ENCODE measurements at regions of chr16 and their contacts with region 1.

Region 1: GRCh38 chr16:22346483-22346882 is 27.9 kb downstream of the CDR2 start:
- DNase-seq: no peak
- ATAC-seq: no peak
- H3K4me3 ChIP-seq: no peak overlapping the region
- H3K4me3 Mint-ChIP-seq: no peak overlapping the region
- H3K27ac ChIP-seq: no peak overlapping the region
- H3K27ac Mint-ChIP-seq: peak overlapping the region; percentile 74 to 78
- H3K4me1 ChIP-seq: no peaks in the 10 kb centered on the region
- H3K4me1 Mint-ChIP-seq: peaks cover 27 to 41% (median 37%) of the 10 kb centered on the region in 3 donors
- H3K27me3 ChIP-seq: no peaks in the 10 kb centered on the region
- H3K27me3 Mint-ChIP-seq: no peaks in the 10 kb centered on the region

Region 2: GRCh38 chr16:22217889-22218730 is 128.4 kb before region 1 on chr16:
- CTCF ChIA-PET with region 1: no interaction called
- POLR2A ChIA-PET with region 1: no interaction called
- DNase-seq: peak in 3 of 35 experiments; percentile 3 to 36 (median 21)
- ATAC-seq: peak in 1 of 4 experiments; percentile 60
- H3K4me3 ChIP-seq: no peak overlapping the region
- H3K4me3 Mint-ChIP-seq: no peak overlapping the region
- H3K27ac ChIP-seq: no peak overlapping the region
- H3K27ac Mint-ChIP-seq: no peak overlapping the region
- H3K4me1 ChIP-seq: no peaks in the 10 kb centered on the region
- H3K4me1 Mint-ChIP-seq: peaks cover 0 to 14% (median 6%) of the 10 kb centered on the region in 3 donors
- H3K27me3 ChIP-seq: no peaks in the 10 kb centered on the region
- H3K27me3 Mint-ChIP-seq: no peaks in the 10 kb centered on the region

Region 3: DNA sequence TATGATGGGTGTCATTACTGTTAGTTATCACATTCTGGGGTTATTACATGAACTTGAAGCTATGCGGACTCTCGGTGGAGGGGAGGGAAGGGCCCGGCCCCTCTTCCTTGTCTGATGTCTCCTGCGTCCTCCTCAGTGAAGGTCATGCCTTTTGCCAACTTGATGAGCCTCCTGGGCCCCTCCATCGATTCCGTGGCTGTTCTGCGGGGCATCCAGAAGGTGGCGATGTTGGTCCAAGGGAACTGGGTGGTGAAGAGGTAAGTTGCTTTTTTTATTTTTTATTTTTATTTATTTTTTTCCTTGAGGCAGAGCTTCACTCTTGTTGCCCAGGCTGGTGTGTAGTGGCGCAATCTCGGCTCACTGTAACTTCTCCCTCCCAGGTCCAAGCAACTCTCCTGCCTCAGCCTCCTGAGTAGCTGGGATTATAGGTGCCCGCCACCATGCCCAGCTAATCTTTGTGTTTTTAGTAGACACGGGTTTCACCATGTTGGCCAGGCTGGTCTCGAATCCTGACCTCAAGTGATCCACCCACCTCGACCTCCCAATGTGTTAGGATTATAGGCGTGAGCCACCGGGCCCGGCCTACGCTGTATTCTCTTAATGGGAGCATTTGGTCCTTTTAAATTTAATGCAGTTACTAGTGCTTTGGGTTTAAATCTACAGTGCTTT is 27.7 kb before region 1 on chr16:
- CTCF ChIA-PET with region 1: no interaction called
- POLR2A ChIA-PET with region 1: interaction called in 1 of 2 experiments, 13 read pairs
- DNase-seq: peak in 34 of 35 experiments; percentile 15 to 71 (median 56)
- ATAC-seq: peak in 3 of 4 experiments; percentile 17 to 28 (median 18)
- H3K4me3 ChIP-seq: no peak overlapping the region
- H3K4me3 Mint-ChIP-seq: no peak overlapping the region
- H3K27ac ChIP-seq: no peak overlapping the region
- H3K27ac Mint-ChIP-seq: no peak overlapping the region
- H3K4me1 ChIP-seq: peaks cover 0 to 10% of the 10 kb centered on the region in 2 experiments
- H3K4me1 Mint-ChIP-seq: peaks cover 7 to 8% (median 8%) of the 10 kb centered on the region in 3 donors
- H3K27me3 ChIP-seq: no peaks in the 10 kb centered on the region
- H3K27me3 Mint-ChIP-seq: no peaks in the 10 kb centered on the region

Region 4: DNA sequence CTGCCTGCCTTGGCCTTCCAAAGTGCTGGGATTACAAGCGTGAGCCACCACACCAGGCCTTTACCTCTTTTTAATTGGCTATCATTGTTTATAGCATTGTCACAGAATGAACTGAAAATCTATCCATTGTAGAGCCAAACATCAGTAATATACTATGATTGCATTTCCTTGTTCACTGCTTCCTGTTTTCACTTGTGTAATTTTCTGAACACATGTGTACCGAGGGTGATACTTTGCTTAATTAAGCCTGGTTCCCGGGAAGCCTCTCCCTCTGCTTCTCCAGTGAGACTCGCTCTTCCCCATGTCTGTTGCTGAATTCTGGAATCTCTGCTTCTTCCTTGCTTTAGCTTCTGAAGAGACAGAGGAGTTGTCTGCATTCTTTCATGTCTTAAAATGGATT is 16.2 kb before region 1 on chr16:
- CTCF ChIA-PET with region 1: no interaction called
- POLR2A ChIA-PET with region 1: no interaction called
- DNase-seq: no peak
- ATAC-seq: no peak
- H3K4me3 ChIP-seq: no peak overlapping the region
- H3K4me3 Mint-ChIP-seq: no peak overlapping the region
- H3K27ac ChIP-seq: no peak overlapping the region
- H3K27ac Mint-ChIP-seq: peak overlapping the region; percentile 66 to 67
- H3K4me1 ChIP-seq: no peaks in the 10 kb centered on the region
- H3K4me1 Mint-ChIP-seq: peaks cover 13 to 37% (median 20%) of the 10 kb centered on the region in 3 donors
- H3K27me3 ChIP-seq: no peaks in the 10 kb centered on the region
- H3K27me3 Mint-ChIP-seq: no peaks in the 10 kb centered on the region

Measured in T-cell (primary cell).